CD8-positive, alpha-beta T cell (primary cell): ENCODE measurements at regions of chr7 and their contacts with region 1.

Region 1: DNA sequence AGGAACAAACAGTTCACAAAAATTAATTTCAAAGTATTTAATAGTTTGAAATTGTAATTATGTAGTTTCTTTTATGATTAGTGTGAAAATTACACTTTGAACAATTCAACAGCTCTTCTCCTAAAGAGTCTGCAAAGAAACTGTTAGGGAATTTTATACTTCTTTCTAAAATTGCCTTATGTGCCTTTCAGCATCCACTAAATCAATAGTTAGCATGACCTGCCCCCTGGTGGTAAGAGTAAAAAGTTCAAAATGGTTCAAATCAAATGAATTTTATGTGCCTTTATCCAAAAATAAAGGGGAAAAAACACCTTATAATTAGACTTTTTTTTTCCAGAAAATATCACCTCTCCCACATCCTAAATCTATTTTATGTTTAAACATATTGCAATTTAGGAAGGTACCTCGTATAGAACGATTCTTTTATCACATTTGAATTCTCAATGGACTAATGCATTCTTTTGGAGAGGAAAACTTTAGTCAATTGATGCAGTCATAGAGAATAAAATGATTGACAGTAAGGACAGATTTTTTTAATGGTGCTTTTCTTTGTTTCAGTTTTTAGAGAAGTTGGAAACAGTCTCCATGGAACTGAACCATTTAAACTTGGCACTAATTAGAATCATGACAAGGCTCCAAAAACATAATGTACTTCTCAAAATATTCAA is 163.7 kb downstream of the SEMA3D start:
- DNase-seq: peak in 3 of 9 experiments; percentile 31 to 48 (median 32)
- ATAC-seq: no peak
- H3K4me3 ChIP-seq: no peak overlapping the region
- H3K4me3 Mint-ChIP-seq: no peak overlapping the region
- H3K27ac ChIP-seq: no peak overlapping the region
- H3K27ac Mint-ChIP-seq: no peak overlapping the region
- H3K4me1 ChIP-seq: no peaks in the 10 kb centered on the region
- H3K4me1 Mint-ChIP-seq: no peaks in the 10 kb centered on the region
- H3K27me3 ChIP-seq: no peaks in the 10 kb centered on the region
- H3K27me3 Mint-ChIP-seq: peaks cover 3% of the 10 kb centered on the region
- CTCF ChIP-seq: peak; percentile 69

Region 2: GRCh38 chr7:84446991-84447480 is 576.1 kb before region 1 on chr7:
- CTCF ChIA-PET with region 1: no interaction called
- POLR2A ChIA-PET with region 1: no interaction called
- intact Hi-C with region 1: no loop called
- DNase-seq: peak in 2 of 9 experiments; percentile 0 to 17
- ATAC-seq: no peak
- H3K4me3 ChIP-seq: no peak overlapping the region
- H3K4me3 Mint-ChIP-seq: no peak overlapping the region
- H3K27ac ChIP-seq: no peak overlapping the region
- H3K27ac Mint-ChIP-seq: no peak overlapping the region
- H3K4me1 ChIP-seq: no peaks in the 10 kb centered on the region
- H3K4me1 Mint-ChIP-seq: no peaks in the 10 kb centered on the region
- H3K27me3 ChIP-seq: no peaks in the 10 kb centered on the region
- H3K27me3 Mint-ChIP-seq: no peaks in the 10 kb centered on the region
- CTCF ChIP-seq: no peak

Region 3: GRCh38 chr7:85000735-85001350 is 22.3 kb before region 1 on chr7:
- CTCF ChIA-PET with region 1: no interaction called
- POLR2A ChIA-PET with region 1: no interaction called
- intact Hi-C with region 1: no loop called
- DNase-seq: no peak
- ATAC-seq: no peak
- H3K4me3 ChIP-seq: no peak overlapping the region
- H3K4me3 Mint-ChIP-seq: no peak overlapping the region
- H3K27ac ChIP-seq: no peak overlapping the region
- H3K27ac Mint-ChIP-seq: no peak overlapping the region
- H3K4me1 ChIP-seq: no peaks in the 10 kb centered on the region
- H3K4me1 Mint-ChIP-seq: no peaks in the 10 kb centered on the region
- H3K27me3 ChIP-seq: no peaks in the 10 kb centered on the region
- H3K27me3 Mint-ChIP-seq: no peaks in the 10 kb centered on the region
- CTCF ChIP-seq: no peak

Region 4: DNA sequence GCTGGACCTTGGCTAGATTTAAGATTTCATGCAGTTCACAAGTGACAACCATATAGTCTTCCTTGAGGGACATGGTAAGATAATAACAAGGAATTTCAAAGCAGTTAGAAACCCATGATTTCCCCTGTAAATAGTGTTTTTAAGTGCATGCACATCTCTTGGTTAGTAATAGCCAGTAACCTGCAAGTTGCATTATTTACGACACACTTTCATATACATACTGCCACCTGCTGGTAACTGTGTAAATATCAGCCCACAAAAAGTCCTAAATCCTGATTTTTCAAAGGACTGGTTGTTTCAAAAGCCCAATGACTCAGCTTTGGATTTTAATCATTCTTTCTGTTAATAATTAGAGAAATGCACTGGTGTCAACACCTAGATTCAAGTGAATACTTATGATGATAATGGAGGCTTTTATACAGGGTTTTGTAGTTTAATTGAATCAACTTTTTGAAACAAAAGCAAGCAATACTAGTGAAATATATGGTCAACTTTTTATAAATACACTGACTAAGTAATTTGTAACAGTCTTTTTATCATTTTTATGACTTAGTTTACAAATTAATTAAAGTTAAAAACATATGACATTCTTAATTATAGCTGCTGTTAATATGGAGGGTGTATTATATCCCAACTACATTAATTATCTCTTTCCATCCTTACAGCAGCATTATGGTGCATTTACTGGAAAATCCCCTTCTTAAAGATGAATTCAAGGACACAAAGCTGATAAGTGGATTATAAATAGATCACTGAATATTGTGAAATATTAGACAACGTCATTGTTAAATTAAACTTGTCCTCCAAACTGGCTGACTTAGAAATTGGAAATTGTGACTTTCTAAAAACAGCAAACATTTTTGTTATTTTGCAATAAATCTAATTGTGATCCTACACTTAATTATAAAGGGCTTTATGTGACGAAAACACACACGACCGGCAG is 531.3 kb after region 1 on chr7:
- CTCF ChIA-PET with region 1: no interaction called
- POLR2A ChIA-PET with region 1: no interaction called
- intact Hi-C with region 1: loop called in 1 of 2 experiments (anchors 10 kb)
- DNase-seq: peak in 2 of 9 experiments; percentile 2 to 27
- ATAC-seq: no peak
- H3K4me3 ChIP-seq: no peak overlapping the region
- H3K4me3 Mint-ChIP-seq: no peak overlapping the region
- H3K27ac ChIP-seq: no peak overlapping the region
- H3K27ac Mint-ChIP-seq: no peak overlapping the region
- H3K4me1 ChIP-seq: no peaks in the 10 kb centered on the region
- H3K4me1 Mint-ChIP-seq: no peaks in the 10 kb centered on the region
- H3K27me3 ChIP-seq: no peaks in the 10 kb centered on the region
- H3K27me3 Mint-ChIP-seq: no peaks in the 10 kb centered on the region
- CTCF ChIP-seq: peak; percentile 42